ENCODE measurements at regions of chr13 and their contacts with region 1.

Region 1: DNA sequence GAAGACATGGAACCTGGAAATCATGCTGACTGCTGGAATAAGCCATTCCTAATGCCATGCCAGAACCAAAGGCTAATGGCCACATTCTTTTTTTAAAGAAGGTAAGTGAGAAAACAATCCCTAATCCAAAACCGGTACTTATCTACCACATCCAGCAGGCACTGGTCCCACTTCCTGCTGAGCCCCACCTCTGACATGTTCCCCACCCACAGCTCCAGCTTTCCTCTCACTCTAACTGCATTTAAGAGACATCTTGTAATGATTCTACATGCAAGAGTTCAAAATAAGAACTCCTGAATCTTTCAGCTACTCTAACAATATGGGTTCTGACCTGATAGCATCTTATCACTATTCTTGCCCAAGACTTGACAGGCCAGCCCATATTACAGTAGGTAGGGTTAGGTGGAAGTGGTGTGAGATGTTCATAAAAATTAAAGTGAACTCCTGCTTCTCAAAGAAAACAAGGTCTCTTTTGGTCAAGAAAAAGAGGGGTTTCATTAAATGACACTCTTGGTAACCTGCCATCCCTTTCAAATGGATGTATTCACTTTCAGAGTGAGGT is 41.9 kb downstream of the N4BP2L2 start:
- DNase-seq: no peak
- ATAC-seq: no peak
- H3K4me3 ChIP-seq: no peak overlapping the region
- H3K27ac ChIP-seq: no peak overlapping the region
- H3K4me1 ChIP-seq: peaks cover 49% of the 10 kb centered on the region
- H3K27me3 ChIP-seq: no peaks in the 10 kb centered on the region
- CTCF ChIP-seq: no peak
- EP300 ChIP-seq: no peak
- POLR2A ChIP-seq: no peak
- RAD21 ChIP-seq: no peak

Region 2: DNA sequence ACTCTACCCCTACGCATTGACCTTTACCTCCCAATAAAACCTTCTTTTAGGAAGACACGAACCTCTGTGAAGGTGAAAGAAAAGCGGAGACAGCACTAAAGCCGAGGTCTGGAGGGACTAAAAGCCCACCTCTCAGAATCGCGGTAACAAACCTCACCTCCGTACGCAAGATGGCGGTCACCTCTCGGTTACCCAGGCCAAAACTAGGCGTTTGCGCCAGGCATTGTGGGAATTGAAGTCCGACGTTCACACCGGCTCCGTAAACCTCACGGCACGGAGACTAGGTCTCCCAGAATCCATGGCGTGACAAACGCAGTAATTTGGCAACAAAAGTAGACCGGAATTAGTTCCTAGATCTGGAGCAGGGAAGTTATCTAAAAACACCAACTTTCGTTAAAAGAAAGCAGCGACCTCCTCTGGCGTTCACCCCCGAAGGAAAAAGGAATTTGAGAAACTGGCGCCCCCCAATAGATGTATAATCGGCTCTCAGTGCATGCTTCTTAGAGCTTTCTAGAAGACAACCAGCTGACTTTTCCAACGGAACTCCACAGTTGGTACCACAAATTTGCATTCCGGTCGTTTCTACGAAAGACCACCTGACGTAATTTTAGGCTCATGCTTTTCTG is 42.1 kb after region 1 on chr13 and contains the start of gene N4BP2L2:
- CTCF ChIA-PET with region 1: no interaction called
- POLR2A ChIA-PET with region 1: no interaction called
- in situ Hi-C with region 1: no loop called
- intact Hi-C with region 1: loop called (anchors 5 kb)
- DNase-seq: peak; percentile 96
- ATAC-seq: peak; percentile 99
- H3K4me3 ChIP-seq: peak within 1 kb of the TSS; percentile 80 to 85 (median 84)
- H3K27ac ChIP-seq: peak within 1 kb of the TSS; percentile 94
- H3K4me1 ChIP-seq: peaks cover 36% of the 10 kb centered on the region
- H3K27me3 ChIP-seq: no peaks in the 10 kb centered on the region; a peak in 1 of 5 replicates
- CTCF ChIP-seq: peak; percentile 78
- EP300 ChIP-seq: 0 out of 4 replicates have a peak, but pooled peaks of 1 of the 2 experiments have one; percentile 35
- POLR2A ChIP-seq: peak; percentile 77 to 79
- RAD21 ChIP-seq: peak; percentile 12; the same call in 1 of the 2 replicates
- total RNA-seq, gene N4BP2L2: 81.2 and 82.6 TPM in 2 replicates

Measured in HepG2 (cell line).